Activated CD4-positive, alpha-beta T cell treated with anti-CD3 and anti-CD28 coated beads, Interleukin-2, amount 10 ng/mL, durations not matched to agents 24 days and 14 days (primary cell): ENCODE measurements at regions of chr10 and their contacts with region 1.

Region 1: DNA sequence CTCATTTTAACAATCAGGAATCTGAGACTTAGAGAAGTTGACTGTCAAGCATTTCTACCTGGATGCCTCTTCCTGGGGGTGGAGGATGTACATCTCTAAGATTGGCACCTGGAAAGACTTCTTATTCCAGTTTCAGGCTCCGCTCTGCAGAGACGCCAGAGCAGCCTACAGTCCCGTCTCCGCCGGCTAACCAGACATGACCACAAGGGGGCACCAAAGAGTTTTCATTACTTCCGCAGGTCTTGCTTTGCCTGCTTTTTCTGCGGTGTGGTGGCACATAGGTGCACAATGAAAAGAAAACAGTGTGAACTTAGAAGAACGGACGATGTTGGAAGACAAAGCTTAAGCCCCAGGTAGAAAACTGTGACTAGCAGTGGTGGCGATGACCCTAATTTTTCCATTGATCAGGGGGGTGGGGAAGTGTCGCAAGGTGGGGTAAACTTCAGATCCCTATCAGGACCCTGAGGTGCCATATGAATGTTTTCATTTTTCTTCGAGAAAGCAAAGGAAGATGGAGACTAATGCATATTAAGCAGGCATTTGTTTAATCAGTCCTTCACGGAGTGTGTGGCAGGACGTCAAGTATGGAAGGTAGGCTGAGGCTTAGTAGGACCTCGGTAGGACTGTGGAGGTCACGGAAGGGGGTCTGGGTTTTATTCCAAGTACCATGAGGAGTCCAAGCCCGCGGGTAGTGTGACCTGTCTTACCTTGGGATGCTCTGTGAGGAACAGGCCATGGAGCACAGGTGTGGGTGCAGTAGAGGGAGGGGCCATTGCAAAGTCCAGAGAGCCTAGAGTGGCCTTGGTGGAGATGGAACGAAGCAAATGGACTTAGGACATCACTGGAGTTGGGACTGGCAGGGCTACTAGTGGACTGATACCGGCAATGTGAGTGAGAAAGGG is 60.1 kb upstream of the SORCS3 start:
- DNase-seq: peak; percentile 90
- H3K4me3 Mint-ChIP-seq: no peak overlapping the region
- H3K27ac Mint-ChIP-seq: no peak overlapping the region
- H3K4me1 Mint-ChIP-seq: no peaks in the 10 kb centered on the region
- H3K27me3 Mint-ChIP-seq: peaks cover 9% of the 10 kb centered on the region

Region 2: DNA sequence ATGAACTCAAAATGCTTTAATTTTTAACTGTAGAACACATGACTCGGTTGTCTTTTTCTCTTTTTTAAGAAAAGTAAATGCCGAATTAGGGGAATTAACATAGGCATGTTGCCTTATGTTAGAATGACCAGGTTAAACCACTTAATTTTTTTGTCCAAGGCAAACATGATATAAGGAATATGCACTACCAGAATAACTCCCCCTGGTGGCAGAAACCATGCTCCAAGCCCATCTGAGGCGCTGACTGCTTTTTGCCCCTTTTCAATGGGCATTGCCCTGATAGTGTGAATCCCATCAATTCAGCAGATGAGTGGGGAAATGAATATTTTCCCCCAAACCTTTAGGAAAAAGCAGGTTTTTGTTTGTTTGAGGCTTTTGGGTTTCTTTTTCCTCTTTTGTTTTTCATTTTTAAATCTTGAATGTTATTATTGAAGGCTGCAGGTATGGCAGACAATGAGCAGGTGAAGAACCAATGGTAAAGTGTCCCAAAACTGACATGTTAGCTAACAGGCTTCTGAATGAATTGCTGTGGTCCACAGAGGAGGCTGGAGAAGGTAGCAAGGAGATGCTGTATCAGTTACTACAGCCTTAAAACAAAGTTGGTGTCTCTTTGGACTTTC is 344.3 kb after region 1 on chr10:
- intact Hi-C with region 1: loop called (anchors 2 kb)
- DNase-seq: peak; percentile 71
- H3K4me3 Mint-ChIP-seq: no peak overlapping the region
- H3K27ac Mint-ChIP-seq: no peak overlapping the region
- H3K4me1 Mint-ChIP-seq: no peaks in the 10 kb centered on the region
- H3K27me3 Mint-ChIP-seq: no peaks in the 10 kb centered on the region